Transverse colon (tissue), 4 donors: ENCODE measurements at regions of chr20 and their contacts with region 1.

Region 1: GRCh38 chr20:63042448-63043071 is 35.8 kb upstream of the BHLHE23 start:
- DNase-seq: no peak
- H3K4me3 ChIP-seq: no peak overlapping the region
- H3K27ac ChIP-seq: no peak overlapping the region
- H3K4me1 ChIP-seq: no peaks in the 10 kb centered on the region
- H3K27me3 ChIP-seq: peaks cover 55% of the 10 kb centered on the region
- CTCF ChIP-seq: no peak
- EP300 ChIP-seq: no peak
- POLR2A ChIP-seq: no peak

Region 2: GRCh38 chr20:63223221-63224207 is 181.0 kb after region 1 on chr20:
- in situ Hi-C with region 1: no loop called
- intact Hi-C with region 1: loop called (anchors 5 kb)
- DNase-seq: peak; percentile 36
- H3K4me3 ChIP-seq: no peak overlapping the region
- H3K27ac ChIP-seq: no peak overlapping the region
- H3K4me1 ChIP-seq: peaks cover 0 to 9% (median 6%) of the 10 kb centered on the region in 4 donors
- H3K27me3 ChIP-seq: peaks cover 5% of the 10 kb centered on the region
- CTCF ChIP-seq: peak; percentile 59 to 69 (median 68)
- EP300 ChIP-seq: no peak
- POLR2A ChIP-seq: no peak